ENCODE measurements at regions of chr11 and their contacts with region 1.

Region 1: DNA sequence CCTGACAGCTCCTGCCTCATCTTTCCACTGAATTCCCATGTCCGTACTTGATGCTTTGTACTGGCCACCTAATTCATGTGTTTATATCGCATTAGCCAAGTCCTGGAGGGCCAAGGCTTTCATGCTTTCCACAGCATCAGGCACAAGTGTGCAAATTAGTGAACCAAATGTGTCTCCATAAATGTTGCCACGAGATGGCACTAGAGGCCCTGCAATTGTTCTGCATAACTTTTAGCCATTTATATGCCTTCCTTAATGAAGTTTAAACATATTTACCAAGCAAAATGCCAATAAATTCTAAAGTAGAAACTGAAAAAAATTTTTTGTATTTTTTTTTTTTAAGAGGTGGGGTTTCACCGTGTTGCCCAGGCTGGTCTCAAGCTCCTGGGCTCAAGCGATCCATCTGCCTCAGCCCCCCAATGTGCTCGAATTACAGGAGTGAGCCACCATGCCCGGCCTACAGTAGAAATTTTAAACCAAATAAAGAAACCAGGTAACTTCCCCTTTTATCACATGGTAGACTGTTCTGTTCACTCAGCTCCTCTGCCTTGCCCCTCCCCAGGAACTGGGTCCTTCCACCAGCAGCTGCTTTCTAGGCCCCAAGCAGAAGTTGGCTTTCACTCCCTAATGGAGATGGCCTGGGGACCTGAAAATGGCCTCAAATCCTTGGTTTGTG is 20.8 kb upstream of the IL18BP start:
- DNase-seq: no peak
- H3K4me3 ChIP-seq: no peak overlapping the region
- H3K27me3 ChIP-seq: no peaks in the 10 kb centered on the region
- CTCF ChIP-seq: peak; percentile 76

Region 2: DNA sequence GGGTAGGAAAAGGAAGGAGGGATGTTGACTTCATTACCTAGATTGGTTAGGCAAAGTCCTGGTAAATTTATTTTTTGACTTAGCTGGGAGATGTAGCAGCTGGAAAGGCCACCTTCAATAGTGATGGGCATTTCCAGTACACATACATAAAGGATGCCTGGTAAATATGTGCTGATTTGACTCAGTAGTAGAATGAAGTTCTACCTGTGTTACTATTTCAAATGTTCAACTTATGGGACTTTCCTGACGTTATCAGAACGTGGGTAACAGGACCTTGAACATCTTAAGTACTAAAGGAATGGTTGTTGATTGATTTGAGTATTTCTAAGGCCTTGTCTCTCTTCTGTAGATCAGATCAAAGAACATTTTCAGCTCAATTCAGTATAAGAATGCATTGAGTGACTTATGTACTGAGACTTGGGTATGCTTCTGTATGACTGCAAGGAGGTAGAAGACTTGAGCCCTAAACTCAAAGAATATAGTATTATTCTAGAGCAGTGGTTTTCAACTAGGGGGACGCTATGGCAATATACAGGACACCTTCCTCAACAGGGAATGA is 21.9 kb before region 1 on chr11:
- CTCF ChIA-PET with region 1: interaction called, 15 read pairs
- POLR2A ChIA-PET with region 1: no interaction called
- DNase-seq: no peak
- H3K4me3 ChIP-seq: no peak overlapping the region
- H3K27me3 ChIP-seq: no peaks in the 10 kb centered on the region
- CTCF ChIP-seq: no peak

Region 3: DNA sequence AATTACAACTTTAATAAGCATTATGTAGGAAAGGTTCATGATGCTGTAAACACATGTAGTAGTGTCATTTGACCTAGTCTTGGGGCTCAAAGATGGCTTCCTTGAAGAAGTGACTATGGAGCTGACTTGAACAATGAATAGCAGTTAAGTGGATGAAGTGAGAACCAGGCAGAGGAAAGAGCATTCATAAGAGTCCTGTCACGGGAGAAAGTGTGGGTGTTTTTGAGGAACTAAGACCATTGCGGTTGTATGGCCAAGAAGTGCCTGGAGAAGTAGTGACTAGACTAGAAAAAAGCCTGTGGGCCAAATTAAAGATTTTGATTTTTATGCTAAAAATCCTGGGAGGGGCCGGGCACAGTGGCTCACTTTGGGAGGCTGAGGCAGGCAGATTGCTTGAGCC is 13.6 kb after region 1 on chr11:
- CTCF ChIA-PET with region 1: interaction called, 30 read pairs
- POLR2A ChIA-PET with region 1: interaction called, 4 read pairs
- DNase-seq: no peak
- H3K4me3 ChIP-seq: no peak overlapping the region
- H3K27me3 ChIP-seq: no peaks in the 10 kb centered on the region
- CTCF ChIP-seq: no peak

Region 4: GRCh38 chr11:72030472-72031045 is 52.7 kb after region 1 on chr11:
- CTCF ChIA-PET with region 1: interaction called, 10 read pairs
- POLR2A ChIA-PET with region 1: no interaction called
- DNase-seq: no peak
- H3K4me3 ChIP-seq: no peak overlapping the region
- H3K27me3 ChIP-seq: no peaks in the 10 kb centered on the region
- CTCF ChIP-seq: no peak

Region 5: GRCh38 chr11:72179804-72180396 is 202.0 kb after region 1 on chr11:
- CTCF ChIA-PET with region 1: interaction called, 16 read pairs
- POLR2A ChIA-PET with region 1: no interaction called
- DNase-seq: no peak
- H3K4me3 ChIP-seq: no peak overlapping the region
- H3K27me3 ChIP-seq: no peaks in the 10 kb centered on the region
- CTCF ChIP-seq: no peak

Region 6: DNA sequence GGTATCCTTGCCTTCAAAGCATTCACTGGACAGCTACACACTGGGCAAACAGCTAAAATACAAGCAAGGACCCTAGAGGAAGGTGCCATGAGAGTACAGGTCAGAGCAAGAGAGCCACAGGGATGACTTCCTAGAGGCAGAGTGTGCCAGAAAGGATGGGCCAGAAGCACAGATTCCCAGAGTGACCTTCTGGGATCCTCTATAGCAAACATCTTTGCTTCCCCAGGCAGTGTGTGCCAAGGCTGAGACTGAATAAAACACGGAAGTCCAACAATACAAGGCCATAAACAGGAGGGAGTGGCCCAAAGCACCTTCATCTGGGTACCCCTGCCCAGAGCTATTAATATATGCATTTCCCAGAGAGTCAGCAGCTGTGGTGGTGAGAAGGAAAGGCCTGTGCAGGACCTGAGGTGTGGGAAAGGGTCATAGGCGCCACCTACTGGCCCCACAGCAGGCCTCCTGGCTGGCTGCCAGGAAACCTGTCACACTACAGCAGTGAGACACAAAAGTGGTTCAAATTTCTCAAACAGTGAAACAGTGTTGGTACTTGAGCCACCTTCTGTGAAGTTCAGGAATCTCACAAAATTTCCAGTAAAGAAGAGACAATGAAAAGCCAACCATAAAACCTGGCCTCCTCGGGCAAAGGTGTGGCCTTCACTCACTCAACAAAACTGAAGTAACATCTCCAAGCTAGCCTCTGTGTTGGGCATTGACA is 436.2 kb after region 1 on chr11:
- CTCF ChIA-PET with region 1: interaction called, 13 read pairs
- POLR2A ChIA-PET with region 1: no interaction called
- DNase-seq: no peak
- H3K4me3 ChIP-seq: no peak overlapping the region
- H3K27me3 ChIP-seq: no peaks in the 10 kb centered on the region
- CTCF ChIP-seq: peak; percentile 91

Region 7: DNA sequence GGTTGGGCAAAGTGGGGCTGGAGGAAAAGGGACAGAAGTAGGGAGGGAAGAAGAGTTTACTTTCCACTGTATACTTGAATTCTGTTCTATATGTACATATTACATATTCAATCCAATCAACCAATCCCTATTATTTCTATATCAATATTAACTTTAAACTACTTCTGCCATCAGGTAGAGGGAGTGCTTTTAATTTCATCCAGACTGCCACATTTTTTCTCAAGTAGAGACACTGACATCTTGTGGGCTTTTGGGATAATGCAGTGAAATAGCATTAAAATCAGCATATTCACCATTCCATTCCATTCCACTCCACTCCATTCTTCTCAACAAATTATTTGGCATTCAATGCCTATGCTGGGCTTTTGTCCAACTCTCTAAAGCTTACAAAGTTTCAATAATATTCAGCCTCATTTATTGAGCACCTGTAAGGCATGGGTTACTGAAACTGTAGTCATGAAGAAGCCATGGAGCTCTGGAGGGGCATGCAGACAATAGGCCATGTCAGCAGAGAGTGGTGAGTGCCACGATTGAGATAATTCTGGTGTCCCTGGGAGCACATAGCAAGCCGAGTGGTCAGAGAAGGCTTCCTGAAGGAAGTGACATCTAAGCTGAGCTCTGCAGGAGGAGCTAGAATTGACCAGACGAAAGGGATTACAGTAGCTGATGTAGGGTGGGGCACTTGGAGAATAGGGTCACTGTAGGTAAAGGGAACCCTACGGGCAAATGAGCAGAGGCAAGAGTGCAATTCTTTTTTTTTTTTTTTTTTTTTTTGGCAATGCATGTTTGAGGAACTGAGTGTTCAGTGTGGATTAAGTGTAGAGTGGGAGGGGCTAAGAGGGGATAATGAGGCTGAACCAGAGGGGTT is 469.3 kb after region 1 on chr11:
- CTCF ChIA-PET with region 1: interaction called, 4 read pairs
- POLR2A ChIA-PET with region 1: interaction called, 18 read pairs
- DNase-seq: no peak
- H3K4me3 ChIP-seq: no peak overlapping the region
- H3K27me3 ChIP-seq: peaks cover 7% of the 10 kb centered on the region; the same call in 1 of the 2 replicates
- CTCF ChIP-seq: peak; percentile 82